Breast epithelium (tissue), 4 donors: ENCODE measurements at regions of chr12 and their contacts with region 1.

Region 1: DNA sequence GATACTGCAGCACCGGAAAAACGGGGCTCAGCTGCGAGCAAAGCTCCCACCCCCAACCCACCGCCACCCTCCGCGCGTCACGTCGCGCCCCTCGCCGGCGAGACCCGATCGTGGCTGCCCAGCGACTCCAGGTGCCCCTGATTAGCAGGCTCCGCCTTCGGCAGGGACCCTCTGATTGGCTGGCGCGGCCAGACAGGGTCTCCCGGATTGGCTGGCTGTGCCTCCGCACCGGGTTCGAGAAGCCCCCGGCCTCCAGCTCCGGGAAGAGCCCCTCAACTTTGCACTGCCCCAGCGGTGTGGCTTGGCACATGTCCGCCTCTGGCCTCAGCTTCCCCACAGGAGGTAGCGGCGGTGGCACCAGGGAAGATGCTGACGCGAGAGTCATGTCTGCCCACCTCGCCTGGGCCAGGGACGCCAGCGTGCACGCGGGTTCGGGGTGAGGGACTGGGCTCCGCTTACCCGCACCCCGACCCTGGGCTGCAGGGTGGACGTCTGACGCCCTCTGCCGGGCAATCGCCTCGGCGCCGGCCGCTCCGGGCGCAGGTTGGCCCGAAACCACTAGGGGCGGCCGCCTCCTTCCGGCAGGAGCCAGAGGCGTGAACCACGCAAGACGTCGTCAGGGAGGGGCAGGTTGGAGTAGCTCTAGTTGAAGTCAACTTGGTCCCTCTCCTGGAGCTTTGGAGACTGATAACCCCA is 498 bp upstream of the RHOF start:
- DNase-seq: peak; percentile 84 to 89
- H3K4me3 ChIP-seq: peak overlapping the region; percentile 30 to 73 (median 53)
- H3K27ac ChIP-seq: peak overlapping the region; percentile 75 to 87
- H3K4me1 ChIP-seq: peaks cover 14 to 38% of the 10 kb centered on the region in 2 donors
- H3K27me3 ChIP-seq: no peaks in the 10 kb centered on the region
- CTCF ChIP-seq: peak; percentile 100
- POLR2A ChIP-seq: no peak

Region 2: GRCh38 chr12:121383601-121384021 is 410.4 kb before region 1 on chr12:
- intact Hi-C with region 1: no loop called
- DNase-seq: no peak
- H3K4me3 ChIP-seq: no peak overlapping the region
- H3K27ac ChIP-seq: no peak overlapping the region
- H3K4me1 ChIP-seq: no peaks in the 10 kb centered on the region
- H3K27me3 ChIP-seq: no peaks in the 10 kb centered on the region
- CTCF ChIP-seq: no peak
- POLR2A ChIP-seq: no peak

Region 3: GRCh38 chr12:121811434-121812319 is 17.7 kb after region 1 on chr12:
- intact Hi-C with region 1: loop called (anchors 1 kb)
- DNase-seq: no peak
- H3K4me3 ChIP-seq: peak overlapping the region; percentile 48 to 73 (median 57)
- H3K27ac ChIP-seq: peak overlapping the region; percentile 59 to 90
- H3K4me1 ChIP-seq: peaks cover 9 to 20% of the 10 kb centered on the region in 2 donors
- H3K27me3 ChIP-seq: no peaks in the 10 kb centered on the region
- CTCF ChIP-seq: peak; percentile 88 to 96 (median 90)
- POLR2A ChIP-seq: no peak

Region 4: DNA sequence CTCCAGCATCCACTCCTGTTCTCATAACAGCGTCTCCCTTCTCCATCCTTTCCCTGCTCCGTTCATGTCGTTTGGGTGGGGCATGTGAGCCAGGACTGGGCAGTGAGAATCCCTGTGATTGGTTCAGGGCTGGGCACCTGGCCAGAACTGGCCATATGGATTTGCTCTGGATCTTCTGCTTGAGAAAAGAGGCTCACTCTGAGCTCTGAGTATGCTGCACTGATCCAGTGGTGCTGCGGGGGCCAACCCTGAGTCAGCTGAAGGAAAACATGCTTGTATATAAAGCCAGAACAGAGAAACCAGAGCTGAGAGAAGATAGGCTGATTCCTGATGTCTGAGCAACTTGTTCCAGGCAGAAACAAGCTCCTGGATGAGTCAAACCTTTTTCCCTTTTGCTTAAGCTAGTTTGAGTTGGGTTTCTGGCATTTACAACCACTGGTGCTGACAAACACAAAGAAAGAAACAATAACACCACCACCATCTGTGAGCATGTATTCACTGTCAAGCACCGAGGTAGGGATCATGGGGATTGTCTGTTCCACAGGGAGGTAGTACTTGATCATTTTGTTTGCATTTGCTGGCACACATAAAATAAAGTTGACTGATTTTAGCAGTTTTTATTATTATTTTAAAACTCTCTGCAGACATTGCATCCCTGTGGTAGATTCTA is 78.7 kb after region 1 on chr12:
- intact Hi-C with region 1: no loop called
- DNase-seq: no peak
- H3K4me3 ChIP-seq: no peak overlapping the region
- H3K27ac ChIP-seq: no peak overlapping the region
- H3K4me1 ChIP-seq: no peaks in the 10 kb centered on the region
- H3K27me3 ChIP-seq: no peaks in the 10 kb centered on the region
- CTCF ChIP-seq: no peak
- POLR2A ChIP-seq: no peak

Region 5: GRCh38 chr12:122021822-122022526 is 228.0 kb after region 1 on chr12 and contains the start of gene BCL7A:
- intact Hi-C with region 1: loop called (anchors 5 kb)
- DNase-seq: peak; percentile 58 to 67
- H3K4me3 ChIP-seq: peak within 1 kb of the TSS; percentile 65 to 97 (median 77)
- H3K27ac ChIP-seq: peak within 1 kb of the TSS; percentile 84 to 88
- H3K4me1 ChIP-seq: no peaks in the 10 kb centered on the region
- H3K27me3 ChIP-seq: no peaks in the 10 kb centered on the region
- CTCF ChIP-seq: no peak
- POLR2A ChIP-seq: no peak
- total RNA-seq, gene BCL7A: 6.2 to 13.5 (median 8.8) TPM

Region 6: DNA sequence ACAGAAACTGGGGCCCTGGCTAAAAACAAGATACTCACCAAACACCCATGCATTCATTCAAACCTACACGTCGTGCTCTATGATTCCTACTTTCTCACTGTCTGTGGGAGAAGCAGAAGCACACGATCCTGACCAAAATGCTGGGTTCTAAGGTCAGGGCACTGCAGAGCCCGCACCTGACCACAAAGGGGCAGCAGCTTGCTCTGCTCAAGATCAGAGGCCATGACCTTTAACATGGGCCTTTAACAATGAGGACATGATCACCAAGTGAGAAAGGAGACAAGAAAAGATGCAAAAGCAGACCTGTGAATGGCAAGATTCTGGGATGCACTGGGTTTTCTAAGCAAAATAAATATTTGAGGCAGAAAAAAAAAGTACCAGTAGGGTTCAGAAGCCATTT is 512.4 kb after region 1 on chr12:
- intact Hi-C with region 1: loop called (anchors 5 kb)
- DNase-seq: no peak
- H3K4me3 ChIP-seq: no peak overlapping the region
- H3K27ac ChIP-seq: no peak overlapping the region
- H3K4me1 ChIP-seq: no peaks in the 10 kb centered on the region
- H3K27me3 ChIP-seq: no peaks in the 10 kb centered on the region
- CTCF ChIP-seq: no peak
- POLR2A ChIP-seq: no peak